IMR-90 (cell line): ENCODE measurements at regions of chr2 and their contacts with region 1.

Region 1: DNA sequence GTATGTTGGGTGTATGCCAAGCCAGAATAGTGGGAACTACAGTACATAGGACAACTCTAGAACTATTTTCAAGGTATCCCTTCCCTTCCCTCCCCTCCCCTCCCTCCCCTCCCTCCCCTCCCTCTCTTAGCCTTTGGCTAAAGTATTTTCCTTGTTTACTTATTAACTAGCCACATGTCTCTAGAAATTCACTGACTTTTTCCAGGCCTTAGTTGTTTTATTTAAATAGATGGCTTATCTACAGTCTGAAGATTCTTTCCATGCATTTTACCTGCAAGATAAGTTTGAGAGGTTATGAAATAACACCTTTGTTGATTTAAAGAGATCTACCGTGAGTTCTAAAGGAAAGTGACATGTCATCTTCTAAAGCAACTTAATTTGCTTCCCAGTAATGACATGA is 402.2 kb downstream of the PARD3B start:
- DNase-seq: no peak
- ATAC-seq: no peak
- H3K4me3 ChIP-seq: no peak overlapping the region
- H3K27ac ChIP-seq: no peak overlapping the region
- H3K4me1 ChIP-seq: peaks cover 4% of the 10 kb centered on the region
- H3K27me3 ChIP-seq: no peaks in the 10 kb centered on the region
- CTCF ChIP-seq: no peak
- POLR2A ChIP-seq: no peak
- RAD21 ChIP-seq: no peak

Region 2: DNA sequence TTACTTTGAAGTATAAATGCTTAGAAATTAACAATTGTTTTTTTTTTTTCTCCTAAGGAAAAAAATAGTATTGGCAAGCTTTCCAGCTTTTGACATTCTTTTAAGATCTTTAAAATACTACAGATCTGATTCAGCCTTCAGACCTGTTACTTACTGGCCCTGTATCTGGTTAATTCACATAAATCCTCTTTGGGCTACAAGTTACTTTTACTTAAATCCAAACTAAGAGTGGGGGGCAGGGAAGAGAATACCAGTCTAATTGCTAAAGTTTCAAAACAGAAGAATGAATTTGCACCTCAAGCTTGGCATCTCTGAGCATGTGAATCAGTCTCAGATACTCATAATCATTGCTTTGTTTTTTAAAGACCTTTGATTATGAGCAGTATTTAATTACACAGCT is 15.9 kb before region 1 on chr2:
- CTCF ChIA-PET with region 1: no interaction called
- POLR2A ChIA-PET with region 1: no interaction called
- dilution Hi-C with region 1: no loop called
- in situ Hi-C with region 1: no loop called
- intact Hi-C with region 1: loop called (anchors 1 kb)
- DNase-seq: peak; percentile 7
- ATAC-seq: no peak
- H3K4me3 ChIP-seq: no peak overlapping the region
- H3K27ac ChIP-seq: no peak overlapping the region
- H3K4me1 ChIP-seq: peaks cover 1% of the 10 kb centered on the region; the same call in 1 of the 2 replicates
- H3K27me3 ChIP-seq: no peaks in the 10 kb centered on the region
- CTCF ChIP-seq: no peak
- POLR2A ChIP-seq: no peak
- RAD21 ChIP-seq: no peak